Activated CD8-positive, alpha-beta T cell treated with anti-CD3 and anti-CD28 coated beads for 36 hours (primary cell): ENCODE measurements at regions of chr1 and their contacts with region 1.

Region 1: DNA sequence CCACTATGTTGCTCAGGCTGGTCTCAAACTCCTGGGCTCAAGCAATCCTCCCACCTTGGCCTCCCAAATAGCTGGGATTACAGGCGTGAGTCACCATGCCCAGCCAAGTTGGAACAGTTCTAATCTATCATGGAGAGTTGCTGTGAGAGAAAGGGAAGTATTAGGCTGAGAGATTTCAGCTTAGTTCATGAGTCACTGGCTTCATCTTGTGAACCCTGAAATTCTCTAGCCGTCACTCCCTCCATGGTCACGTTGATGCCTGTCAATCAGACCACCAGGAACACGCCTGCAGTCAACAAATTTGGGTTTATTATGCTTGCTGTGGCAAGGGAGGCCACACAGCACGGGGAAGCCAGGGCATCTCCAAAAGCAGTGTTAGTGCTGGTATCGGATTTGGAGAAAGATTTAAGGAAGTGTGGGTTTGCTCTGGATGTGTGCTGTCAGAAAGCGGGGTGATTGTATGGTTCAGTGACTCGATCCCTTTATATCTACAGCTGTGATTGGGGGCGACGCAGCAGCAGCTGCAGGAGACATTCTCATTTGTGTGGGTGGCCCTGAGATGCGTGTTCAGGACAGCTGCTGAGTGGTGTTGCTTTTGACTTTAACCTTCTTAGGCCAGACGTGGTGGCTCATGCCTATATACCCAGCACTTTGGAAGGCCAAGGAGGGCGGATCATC is 18.7 kb downstream of the UQCRHL start:
- DNase-seq: no peak
- ATAC-seq: no peak
- H3K4me3 Mint-ChIP-seq: no peak overlapping the region
- H3K27ac Mint-ChIP-seq: no peak overlapping the region
- H3K4me1 Mint-ChIP-seq: peaks cover 2% of the 10 kb centered on the region
- H3K27me3 Mint-ChIP-seq: peaks cover 2% of the 10 kb centered on the region
- CTCF ChIP-seq: no peak

Region 2: GRCh38 chr1:15777909-15778707 is 10.7 kb before region 1 on chr1:
- CTCF ChIA-PET with region 1: interaction called, 17 read pairs
- POLR2A ChIA-PET with region 1: interaction called, 3 read pairs
- intact Hi-C with region 1: no loop called
- DNase-seq: no peak
- ATAC-seq: no peak
- H3K4me3 Mint-ChIP-seq: no peak overlapping the region
- H3K27ac Mint-ChIP-seq: no peak overlapping the region
- H3K4me1 Mint-ChIP-seq: no peaks in the 10 kb centered on the region
- H3K27me3 Mint-ChIP-seq: no peaks in the 10 kb centered on the region
- CTCF ChIP-seq: no peak

Region 3: GRCh38 chr1:15820478-15820877 is 31.7 kb after region 1 on chr1:
- CTCF ChIA-PET with region 1: interaction called, 13 read pairs
- POLR2A ChIA-PET with region 1: no interaction called
- intact Hi-C with region 1: no loop called
- DNase-seq: no peak
- ATAC-seq: no peak
- H3K4me3 Mint-ChIP-seq: no peak overlapping the region
- H3K27ac Mint-ChIP-seq: no peak overlapping the region
- H3K4me1 Mint-ChIP-seq: peaks cover 10% of the 10 kb centered on the region
- H3K27me3 Mint-ChIP-seq: no peaks in the 10 kb centered on the region
- CTCF ChIP-seq: no peak

Region 4: GRCh38 chr1:15866721-15867201 is 78.0 kb after region 1 on chr1:
- CTCF ChIA-PET with region 1: interaction called, 11 read pairs
- POLR2A ChIA-PET with region 1: no interaction called
- intact Hi-C with region 1: no loop called
- DNase-seq: no peak
- ATAC-seq: no peak
- H3K4me3 Mint-ChIP-seq: no peak overlapping the region
- H3K27ac Mint-ChIP-seq: no peak overlapping the region
- H3K4me1 Mint-ChIP-seq: peaks cover 46% of the 10 kb centered on the region
- H3K27me3 Mint-ChIP-seq: no peaks in the 10 kb centered on the region
- CTCF ChIP-seq: no peak

Region 5: DNA sequence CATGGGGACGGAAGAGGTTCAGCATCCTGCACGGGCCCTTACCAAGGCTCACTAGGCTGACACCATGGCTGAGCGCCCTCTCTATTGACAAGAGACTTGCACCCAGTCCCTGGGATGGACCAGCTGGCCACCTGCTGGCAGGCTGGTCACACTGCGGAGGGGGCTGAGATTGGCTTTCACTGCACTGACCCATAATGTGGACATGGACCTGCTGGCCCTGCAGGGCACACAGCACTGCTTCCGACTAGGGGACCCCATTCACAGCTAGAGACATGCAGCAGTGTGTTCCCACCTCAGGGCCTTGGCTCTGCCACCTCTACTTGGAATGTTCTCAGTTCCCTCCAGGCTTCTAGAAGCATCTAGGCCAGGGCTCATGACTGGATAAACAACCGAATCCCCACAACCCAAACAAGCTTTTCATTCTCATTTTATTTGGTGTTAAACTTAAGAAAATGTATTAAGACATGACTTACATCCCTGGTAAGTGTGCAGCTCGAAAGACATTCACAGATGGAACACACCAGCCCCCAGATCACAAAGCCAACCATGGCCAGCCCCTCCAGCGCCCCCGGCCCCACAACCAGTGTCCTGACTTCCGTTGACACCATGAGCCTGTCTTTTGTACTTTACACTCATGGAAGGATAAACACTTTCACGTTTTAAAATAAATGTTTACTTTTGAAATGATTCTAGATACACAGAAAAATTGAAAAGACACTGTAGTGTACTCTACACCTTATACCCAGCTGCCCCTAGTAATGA is 206.0 kb after region 1 on chr1:
- CTCF ChIA-PET with region 1: interaction called, 12 read pairs
- POLR2A ChIA-PET with region 1: no interaction called
- intact Hi-C with region 1: loop called (anchors 2 kb)
- DNase-seq: peak; percentile 70
- ATAC-seq: peak; percentile 97
- H3K4me3 Mint-ChIP-seq: no peak overlapping the region
- H3K27ac Mint-ChIP-seq: no peak overlapping the region
- H3K4me1 Mint-ChIP-seq: no peaks in the 10 kb centered on the region
- H3K27me3 Mint-ChIP-seq: no peaks in the 10 kb centered on the region
- CTCF ChIP-seq: peak; percentile 68

Region 6: DNA sequence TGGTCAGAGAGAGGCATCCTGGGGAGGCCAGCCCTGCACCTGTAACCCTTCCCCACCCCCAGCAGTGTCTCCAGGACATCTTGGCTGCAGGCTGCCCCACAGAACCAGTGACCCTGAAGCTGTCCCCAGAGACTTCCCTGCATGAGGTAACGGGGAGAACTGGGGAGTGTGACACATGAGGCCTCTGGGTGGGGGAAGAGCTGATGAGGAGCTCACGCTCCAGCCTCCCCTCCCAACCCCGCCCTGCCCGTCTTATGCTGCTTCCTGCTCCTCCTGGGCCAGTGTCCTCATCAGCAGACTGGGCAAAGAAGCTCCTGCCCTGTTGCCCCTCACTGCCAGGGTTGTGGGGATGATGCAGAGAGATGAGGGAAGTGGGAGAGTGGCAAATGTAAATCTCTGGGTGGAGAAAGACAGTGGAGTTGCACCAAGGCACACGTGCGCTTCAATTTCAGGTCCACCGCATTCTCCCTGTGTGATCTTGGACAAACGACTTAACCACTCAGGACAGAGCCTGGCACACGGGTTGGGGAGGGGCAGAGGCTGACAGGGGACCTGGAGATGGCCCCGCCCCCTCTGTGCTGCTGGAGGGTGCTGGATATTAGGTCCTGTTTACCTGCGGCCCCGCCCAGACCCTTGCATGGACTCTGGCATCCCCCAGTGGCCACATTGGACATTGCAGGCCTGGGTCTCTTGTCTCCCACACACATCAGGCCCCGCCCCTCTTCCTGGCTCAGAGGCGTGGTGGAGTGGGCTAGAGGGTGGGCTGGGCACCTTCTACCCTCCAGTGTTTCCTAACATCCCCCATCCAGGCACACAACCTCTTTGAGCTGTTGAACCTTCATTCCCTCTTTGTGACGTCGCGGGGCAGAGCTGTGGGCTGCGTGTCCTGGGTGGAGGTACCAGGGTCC is 267.1 kb after region 1 on chr1:
- CTCF ChIA-PET with region 1: interaction called, 13 read pairs
- POLR2A ChIA-PET with region 1: no interaction called
- intact Hi-C with region 1: no loop called
- DNase-seq: peak; percentile 96
- ATAC-seq: peak; percentile 100
- H3K4me3 Mint-ChIP-seq: no peak overlapping the region
- H3K27ac Mint-ChIP-seq: no peak overlapping the region
- H3K4me1 Mint-ChIP-seq: peaks cover 2% of the 10 kb centered on the region
- H3K27me3 Mint-ChIP-seq: no peaks in the 10 kb centered on the region
- CTCF ChIP-seq: peak; percentile 95

Region 7: GRCh38 chr1:16067127-16067768 is 278.5 kb after region 1 on chr1:
- CTCF ChIA-PET with region 1: interaction called, 14 read pairs
- POLR2A ChIA-PET with region 1: no interaction called
- intact Hi-C with region 1: no loop called
- DNase-seq: peak; percentile 18
- ATAC-seq: no peak
- H3K4me3 Mint-ChIP-seq: no peak overlapping the region
- H3K27ac Mint-ChIP-seq: no peak overlapping the region
- H3K4me1 Mint-ChIP-seq: peaks cover 9% of the 10 kb centered on the region
- H3K27me3 Mint-ChIP-seq: peaks cover 7% of the 10 kb centered on the region
- CTCF ChIP-seq: no peak